H1 (cell line): ENCODE measurements at regions of chr2 and their contacts with region 1.

Region 1: GRCh38 chr2:41869542-41870264 is 178.1 kb upstream of the PKDCC start:
- DNase-seq: peak; percentile 33 to 93
- H3K4me3 ChIP-seq: no peak overlapping the region
- H3K27ac ChIP-seq: no peak overlapping the region
- H3K4me1 ChIP-seq: peaks cover 4 to 18% (median 8%) of the 10 kb centered on the region in 4 experiments; a peak in 6 of 7 replicates
- H3K27me3 ChIP-seq: no peaks in the 10 kb centered on the region
- CTCF ChIP-seq: peak; percentile 87 to 94 (median 90)
- EP300 ChIP-seq: no peak
- POLR2A ChIP-seq: no peak
- RAD21 ChIP-seq: peak; percentile 98 to 99

Region 2: DNA sequence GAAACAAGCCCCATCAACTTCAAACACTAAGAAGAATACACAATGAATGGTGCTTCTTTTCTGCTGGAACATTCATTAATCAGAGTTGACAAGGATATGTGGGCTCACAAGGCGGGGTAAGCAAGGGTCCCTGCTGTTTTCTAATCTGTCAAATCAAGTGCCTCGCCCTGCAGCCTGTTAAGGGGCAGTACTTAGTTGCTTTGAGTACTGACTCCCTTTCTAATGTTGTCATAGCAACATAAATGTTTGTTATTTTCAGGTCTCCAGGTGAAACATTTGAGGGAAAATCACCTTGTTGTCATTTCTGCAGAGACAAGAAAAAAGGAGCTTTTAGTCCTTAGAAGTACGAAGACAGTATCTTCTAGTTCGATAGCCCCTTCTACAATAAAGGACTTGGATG is 106.6 kb before region 1 on chr2:
- CTCF ChIA-PET with region 1: no interaction called
- POLR2A ChIA-PET with region 1: no interaction called
- DNase-seq: no peak
- H3K4me3 ChIP-seq: no peak overlapping the region
- H3K27ac ChIP-seq: no peak overlapping the region
- H3K4me1 ChIP-seq: no peaks in the 10 kb centered on the region
- H3K27me3 ChIP-seq: no peaks in the 10 kb centered on the region
- CTCF ChIP-seq: no peak
- EP300 ChIP-seq: no peak
- POLR2A ChIP-seq: no peak
- RAD21 ChIP-seq: no peak

Region 3: DNA sequence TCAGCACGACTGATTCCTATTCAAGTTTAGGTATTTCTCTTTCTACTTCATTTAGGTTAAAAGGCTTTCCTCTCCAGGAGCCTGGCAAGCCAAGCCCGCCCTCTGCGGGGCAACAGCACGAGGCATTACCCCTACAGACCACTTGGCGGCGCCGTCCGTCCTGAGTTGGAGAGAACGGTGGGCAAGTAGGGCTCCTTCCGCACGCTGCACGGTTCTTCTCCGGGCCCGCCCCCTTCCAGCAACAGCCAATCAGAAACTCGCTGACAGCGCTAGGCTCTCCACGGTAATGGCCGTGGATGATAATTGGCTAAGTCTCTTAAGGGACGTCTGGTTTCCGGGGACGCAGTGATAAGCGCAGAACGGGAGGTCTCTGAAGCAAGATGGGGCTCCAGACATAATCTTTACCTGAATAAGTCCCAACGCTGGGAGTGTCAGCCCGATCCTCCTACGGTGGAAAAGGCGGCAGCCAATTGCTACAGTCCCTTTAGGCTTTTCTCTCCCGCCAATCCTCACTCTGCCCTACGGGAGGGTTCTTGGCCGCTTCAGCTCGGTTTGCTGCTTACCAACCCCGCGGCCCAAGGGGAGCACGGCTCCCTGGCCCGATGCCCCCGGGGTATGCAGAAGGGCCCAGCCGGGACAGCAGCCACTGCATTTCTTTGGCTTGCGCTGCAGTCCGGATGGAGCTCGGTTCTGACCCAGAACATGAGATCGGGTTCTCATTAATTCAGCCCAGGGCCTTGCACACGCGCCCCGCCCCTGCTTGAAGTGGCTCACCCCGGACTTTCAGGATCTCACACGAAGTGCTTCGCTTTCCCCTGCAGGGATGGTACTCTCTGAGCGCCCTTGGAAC is 28.8 kb before region 1 on chr2:
- CTCF ChIA-PET with region 1: interaction called, 280 read pairs
- POLR2A ChIA-PET with region 1: no interaction called
- DNase-seq: peak; percentile 95 to 99
- H3K4me3 ChIP-seq: peak overlapping the region; percentile 46 to 84 (median 78)
- H3K27ac ChIP-seq: peak overlapping the region; percentile 17; the same call in 1 of the 2 replicates
- H3K4me1 ChIP-seq: peaks cover 0 to 4% (median 0%) of the 10 kb centered on the region in 4 experiments; a peak in 2 of 7 replicates
- H3K27me3 ChIP-seq: no peaks in the 10 kb centered on the region; a peak in 3 of 7 replicates
- CTCF ChIP-seq: peak; percentile 99
- EP300 ChIP-seq: no peak
- POLR2A ChIP-seq: peak in 1 of 2 experiments; percentile 79; a peak in 2 of 3 replicates
- RAD21 ChIP-seq: peak; percentile 86 to 90

Region 4: GRCh38 chr2:41896186-41896846 is 26.6 kb after region 1 on chr2:
- CTCF ChIA-PET with region 1: interaction called, 64 read pairs
- POLR2A ChIA-PET with region 1: no interaction called
- DNase-seq: no peak
- H3K4me3 ChIP-seq: no peak overlapping the region
- H3K27ac ChIP-seq: no peak overlapping the region
- H3K4me1 ChIP-seq: no peaks in the 10 kb centered on the region
- H3K27me3 ChIP-seq: no peaks in the 10 kb centered on the region
- CTCF ChIP-seq: no peak
- EP300 ChIP-seq: no peak
- POLR2A ChIP-seq: no peak
- RAD21 ChIP-seq: no peak

Region 5: GRCh38 chr2:41966431-41966893 is 96.8 kb after region 1 on chr2:
- CTCF ChIA-PET with region 1: interaction called, 13 read pairs
- POLR2A ChIA-PET with region 1: no interaction called
- DNase-seq: no peak
- H3K4me3 ChIP-seq: no peak overlapping the region
- H3K27ac ChIP-seq: no peak overlapping the region
- H3K4me1 ChIP-seq: peaks cover 0 to 18% (median 11%) of the 10 kb centered on the region in 4 experiments
- H3K27me3 ChIP-seq: no peaks in the 10 kb centered on the region
- CTCF ChIP-seq: no peak
- EP300 ChIP-seq: no peak
- POLR2A ChIP-seq: no peak
- RAD21 ChIP-seq: no peak

Region 6: GRCh38 chr2:42028571-42029148 is 159.0 kb after region 1 on chr2:
- CTCF ChIA-PET with region 1: interaction called, 13 read pairs
- POLR2A ChIA-PET with region 1: interaction called, 4 read pairs
- DNase-seq: no peak
- H3K4me3 ChIP-seq: no peak overlapping the region
- H3K27ac ChIP-seq: no peak overlapping the region
- H3K4me1 ChIP-seq: peaks cover 19 to 42% (median 27%) of the 10 kb centered on the region in 4 experiments
- H3K27me3 ChIP-seq: peaks cover 0 to 12% (median 7%) of the 10 kb centered on the region in 4 experiments; a peak in 3 of 7 replicates
- CTCF ChIP-seq: no peak
- EP300 ChIP-seq: no peak
- POLR2A ChIP-seq: no peak
- RAD21 ChIP-seq: no peak

Region 7: GRCh38 chr2:42095923-42096408 is 226.3 kb after region 1 on chr2:
- CTCF ChIA-PET with region 1: interaction called, 890 read pairs
- POLR2A ChIA-PET with region 1: no interaction called
- DNase-seq: peak in 1 of 2 experiments; percentile 59
- H3K4me3 ChIP-seq: no peak overlapping the region
- H3K27ac ChIP-seq: no peak overlapping the region
- H3K4me1 ChIP-seq: peaks cover 0 to 9% (median 3%) of the 10 kb centered on the region in 4 experiments; a peak in 4 of 7 replicates
- H3K27me3 ChIP-seq: peaks cover 0 to 3% (median 1%) of the 10 kb centered on the region in 4 experiments; a peak in 2 of 7 replicates
- CTCF ChIP-seq: peak in 2 of 3 experiments; percentile 64 to 67; a peak in 3 of 4 replicates
- EP300 ChIP-seq: no peak
- POLR2A ChIP-seq: no peak
- RAD21 ChIP-seq: peak; percentile 76